ENCODE measurements at regions of chr7 and their contacts with region 1.

Region 1: DNA sequence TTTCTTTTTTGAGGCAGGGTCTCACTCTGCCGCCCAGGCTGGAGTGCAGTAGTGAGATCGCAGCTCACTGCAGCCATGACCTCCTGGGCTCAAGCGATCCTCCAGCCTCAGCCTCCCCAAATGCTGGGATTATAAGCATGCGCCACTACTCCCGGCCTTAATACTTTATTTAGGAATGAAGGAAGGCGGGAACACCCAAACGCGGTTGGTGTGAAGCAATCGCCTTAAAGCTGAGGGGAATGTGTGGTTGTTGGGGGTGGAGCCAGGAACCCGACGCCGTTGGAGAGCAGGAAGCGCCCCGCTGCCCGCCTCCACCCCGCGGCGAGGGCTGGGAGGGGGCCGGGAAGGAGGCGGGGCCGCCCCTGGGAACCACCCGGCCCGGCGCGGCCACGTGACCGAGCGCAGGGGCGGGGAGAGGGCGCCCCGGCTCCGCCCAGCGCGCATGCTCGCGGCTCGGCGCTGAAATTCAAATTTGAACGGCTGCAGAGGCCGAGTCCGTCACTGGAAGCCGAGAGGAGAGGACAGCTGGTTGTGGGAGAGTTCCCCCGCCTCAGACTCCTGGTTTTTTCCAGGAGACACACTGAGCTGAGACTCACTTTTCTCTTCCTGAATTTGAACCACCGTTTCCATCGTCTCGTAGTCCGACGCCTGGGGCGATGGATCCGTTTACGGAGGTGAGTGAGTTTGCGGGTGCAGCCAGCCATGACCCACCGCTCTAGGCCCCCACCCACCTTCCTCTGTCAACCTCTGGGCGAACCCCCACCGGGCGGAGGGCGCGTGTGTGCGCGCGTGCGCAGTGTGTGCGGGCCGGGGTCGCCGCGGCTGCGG is at the start of gene ANLN:
- DNase-seq: peak; percentile 91
- H3K4me3 Mint-ChIP-seq: peak within 1 kb of the TSS; percentile 93
- H3K27ac Mint-ChIP-seq: peak within 1 kb of the TSS; percentile 88
- H3K4me1 Mint-ChIP-seq: peaks cover 24% of the 10 kb centered on the region
- H3K27me3 Mint-ChIP-seq: no peaks in the 10 kb centered on the region
- total RNA-seq, gene ANLN: 46.6 to 54.7 TPM

Region 2: GRCh38 chr7:36366718-36367560 is 22.6 kb before region 1 on chr7:
- CTCF ChIA-PET with region 1: interaction called, 23 read pairs
- POLR2A ChIA-PET with region 1: interaction called, 6 read pairs
- intact Hi-C with region 1: loop called (anchors 1 kb)
- DNase-seq: peak; percentile 94
- H3K4me3 Mint-ChIP-seq: peak overlapping the region; percentile 88
- H3K27ac Mint-ChIP-seq: no peak overlapping the region
- H3K4me1 Mint-ChIP-seq: no peaks in the 10 kb centered on the region
- H3K27me3 Mint-ChIP-seq: peaks cover 2% of the 10 kb centered on the region

Measured in activated CD4-positive, alpha-beta memory T cell treated with anti-CD3 and anti-CD28 coated beads for 36 hours (primary cell).